ENCODE measurements at regions of chr1 and their contacts with region 1.

Region 1: DNA sequence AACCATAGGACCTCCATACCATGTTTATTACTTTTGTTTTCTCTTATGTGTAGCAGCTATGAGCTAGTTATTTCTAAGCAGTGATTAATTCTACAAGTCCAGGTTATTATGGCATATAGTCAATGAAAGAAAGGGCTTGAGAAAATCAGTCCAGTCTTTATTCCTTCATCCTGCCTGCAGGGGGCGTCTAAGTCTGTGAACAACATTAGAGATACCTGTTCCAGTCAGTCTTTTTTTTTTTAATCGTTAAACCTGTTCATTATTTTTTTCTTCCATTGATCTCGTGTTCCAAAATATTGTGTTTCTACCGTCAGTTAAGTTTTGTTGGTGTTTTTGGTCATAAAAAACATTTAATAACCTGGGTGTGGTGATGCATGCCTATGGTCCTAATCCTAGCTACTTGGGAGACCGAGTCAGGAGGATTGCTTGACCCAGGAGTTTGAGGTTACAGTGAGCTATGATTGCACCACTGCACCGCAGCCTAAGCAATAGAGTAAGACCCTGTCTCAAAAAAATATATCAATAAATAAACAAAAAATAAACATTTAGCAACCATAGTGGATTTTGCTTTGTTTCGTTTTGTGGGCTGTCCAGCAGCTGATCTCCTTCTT is 29.4 kb upstream of the CD2 start:
- DNase-seq: peak; percentile 94
- H3K4me3 Mint-ChIP-seq: no peak overlapping the region
- H3K27ac Mint-ChIP-seq: no peak overlapping the region
- H3K4me1 Mint-ChIP-seq: peaks cover 26% of the 10 kb centered on the region
- H3K27me3 Mint-ChIP-seq: no peaks in the 10 kb centered on the region

Region 2: DNA sequence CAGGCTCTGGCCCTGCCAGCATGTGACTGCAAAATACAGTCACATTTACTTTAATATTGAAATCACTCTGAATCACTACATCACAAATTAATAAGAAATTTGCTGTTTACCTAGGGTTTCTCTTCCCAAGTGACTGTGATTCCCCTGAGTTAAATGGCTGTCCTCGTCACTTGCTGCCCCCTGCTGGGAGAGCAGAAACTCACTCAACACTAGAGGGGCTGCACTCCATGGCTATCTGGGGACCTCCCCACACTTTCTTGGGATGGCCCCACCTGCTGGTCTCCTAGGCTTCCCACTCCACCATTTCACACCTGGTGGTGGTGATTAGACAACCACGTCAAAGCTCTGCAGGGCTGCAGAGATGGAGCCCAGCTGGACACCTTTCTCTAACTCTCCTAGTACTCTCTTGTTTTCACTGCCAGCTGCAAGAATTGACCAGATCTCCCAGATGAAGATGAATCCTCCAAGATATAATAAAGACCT is 92.8 kb after region 1 on chr1:
- CTCF ChIA-PET with region 1: interaction called, 12 read pairs
- intact Hi-C with region 1: loop called (anchors 1 kb)
- DNase-seq: peak; percentile 91
- H3K4me3 Mint-ChIP-seq: no peak overlapping the region
- H3K27ac Mint-ChIP-seq: peak overlapping the region; percentile 98
- H3K4me1 Mint-ChIP-seq: peaks cover 66% of the 10 kb centered on the region
- H3K27me3 Mint-ChIP-seq: no peaks in the 10 kb centered on the region

Region 3: GRCh38 chr1:116881879-116882520 is 157.1 kb after region 1 on chr1:
- CTCF ChIA-PET with region 1: interaction called, 24 read pairs
- intact Hi-C with region 1: loop called (anchors 1 kb)
- DNase-seq: peak; percentile 77
- H3K4me3 Mint-ChIP-seq: no peak overlapping the region
- H3K27ac Mint-ChIP-seq: no peak overlapping the region
- H3K4me1 Mint-ChIP-seq: peaks cover 12% of the 10 kb centered on the region
- H3K27me3 Mint-ChIP-seq: no peaks in the 10 kb centered on the region

Region 4: GRCh38 chr1:116987256-116987555 is 262.3 kb after region 1 on chr1:
- CTCF ChIA-PET with region 1: interaction called, 4 read pairs
- intact Hi-C with region 1: loop called (anchors 1 kb)
- DNase-seq: peak; percentile 83
- H3K4me3 Mint-ChIP-seq: peak overlapping the region; percentile 68
- H3K27ac Mint-ChIP-seq: peak overlapping the region; percentile 91
- H3K4me1 Mint-ChIP-seq: peaks cover 60% of the 10 kb centered on the region
- H3K27me3 Mint-ChIP-seq: no peaks in the 10 kb centered on the region

Region 5: DNA sequence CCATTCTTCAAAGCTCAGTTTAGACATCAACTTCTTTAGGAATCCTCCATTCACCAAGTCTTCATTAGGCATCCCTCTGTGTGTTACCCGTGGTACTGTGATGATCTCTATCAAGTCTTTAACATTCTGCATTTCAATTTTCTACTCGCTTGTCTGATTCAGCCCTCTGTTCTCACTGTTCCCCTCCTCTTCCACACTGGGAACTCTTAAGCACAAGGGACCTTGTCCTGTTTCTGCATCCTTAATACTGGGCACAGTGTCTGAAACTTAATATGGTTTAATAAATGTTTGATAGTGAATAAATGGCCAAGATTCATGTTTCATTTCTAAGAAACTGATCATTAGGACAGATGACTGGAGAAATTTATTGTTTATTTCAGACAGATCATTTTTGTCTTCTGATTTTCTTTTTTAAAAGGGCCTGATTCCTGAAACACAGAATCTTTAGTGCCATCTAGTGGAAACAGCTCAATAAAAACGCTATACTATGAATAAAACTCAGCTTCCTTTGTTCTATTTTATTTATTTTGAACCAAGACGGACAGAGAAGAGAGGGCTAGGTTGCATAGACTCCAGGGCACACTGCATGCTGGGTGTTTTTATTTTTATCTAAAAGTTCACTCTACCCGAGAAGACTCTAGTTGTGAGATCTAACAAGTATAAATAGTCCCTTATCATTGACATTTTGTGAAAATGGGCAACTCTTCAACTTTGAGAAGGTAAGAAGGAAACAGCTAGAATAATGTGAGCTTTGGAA is 403.6 kb after region 1 on chr1:
- CTCF ChIA-PET with region 1: interaction called, 9 read pairs
- intact Hi-C with region 1: loop called (anchors 1 kb)
- DNase-seq: no peak
- H3K4me3 Mint-ChIP-seq: no peak overlapping the region
- H3K27ac Mint-ChIP-seq: no peak overlapping the region
- H3K4me1 Mint-ChIP-seq: no peaks in the 10 kb centered on the region
- H3K27me3 Mint-ChIP-seq: peaks cover 6% of the 10 kb centered on the region